WTC11 (cell line): ENCODE measurements at regions of chr19 and their contacts with region 1.

Region 1: GRCh38 chr19:46990991-46991676 is 28.5 kb upstream of the NPAS1 start:
- DNase-seq: peak; percentile 90
- ATAC-seq: peak; percentile 81
- H3K4me3 Mint-ChIP-seq: no peak overlapping the region
- H3K27ac Mint-ChIP-seq: peak overlapping the region; percentile 96
- H3K4me1 Mint-ChIP-seq: peaks cover 11% of the 10 kb centered on the region
- H3K27me3 Mint-ChIP-seq: no peaks in the 10 kb centered on the region
- CTCF ChIP-seq: peak; percentile 60

Region 2: GRCh38 chr19:46860125-46860845 is 130.8 kb before region 1 on chr19:
- CTCF ChIA-PET with region 1: interaction called, 27 read pairs
- POLR2A ChIA-PET with region 1: interaction called, 4 read pairs
- DNase-seq: peak; percentile 98
- ATAC-seq: peak; percentile 76
- H3K4me3 Mint-ChIP-seq: peak overlapping the region; percentile 74
- H3K27ac Mint-ChIP-seq: peak overlapping the region; percentile 98
- H3K4me1 Mint-ChIP-seq: peaks cover 15% of the 10 kb centered on the region
- H3K27me3 Mint-ChIP-seq: peaks cover 6% of the 10 kb centered on the region
- CTCF ChIP-seq: no peak

Region 3: GRCh38 chr19:46924874-46925547 is 66.1 kb before region 1 on chr19:
- CTCF ChIA-PET with region 1: interaction called, 16 read pairs
- POLR2A ChIA-PET with region 1: no interaction called
- DNase-seq: no peak
- ATAC-seq: no peak
- H3K4me3 Mint-ChIP-seq: no peak overlapping the region
- H3K27ac Mint-ChIP-seq: peak overlapping the region; percentile 25
- H3K4me1 Mint-ChIP-seq: peaks cover 33% of the 10 kb centered on the region
- H3K27me3 Mint-ChIP-seq: no peaks in the 10 kb centered on the region
- CTCF ChIP-seq: no peak

Region 4: GRCh38 chr19:46975925-46976782 is 15.0 kb before region 1 on chr19:
- CTCF ChIA-PET with region 1: interaction called, 23 read pairs
- POLR2A ChIA-PET with region 1: no interaction called
- DNase-seq: peak; percentile 40
- ATAC-seq: peak; percentile 46
- H3K4me3 Mint-ChIP-seq: 0 out of 2 replicates have a peak overlapping the region, but pooled peaks have one; percentile 2
- H3K27ac Mint-ChIP-seq: peak overlapping the region; percentile 91
- H3K4me1 Mint-ChIP-seq: peaks cover 46% of the 10 kb centered on the region
- H3K27me3 Mint-ChIP-seq: no peaks in the 10 kb centered on the region
- CTCF ChIP-seq: no peak

Region 5: DNA sequence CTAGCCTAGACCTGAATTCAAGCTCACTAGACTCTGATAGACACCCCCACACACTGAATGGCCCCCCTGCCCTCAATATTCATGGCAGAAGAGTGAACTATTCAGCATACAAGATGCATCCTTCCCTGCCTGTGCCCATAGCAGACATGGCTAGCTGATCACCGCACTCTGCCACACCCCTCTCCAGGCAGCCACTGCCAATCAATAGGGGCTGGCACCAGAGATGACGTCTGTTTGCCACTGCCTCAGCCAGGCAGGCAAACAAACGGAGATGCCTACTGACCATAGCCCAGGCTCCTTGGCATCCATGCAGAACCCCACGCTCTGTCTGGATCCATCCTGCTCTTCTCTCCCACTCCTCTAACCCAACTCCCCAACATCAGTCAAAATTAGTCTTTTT is 14.7 kb after region 1 on chr19:
- CTCF ChIA-PET with region 1: interaction called, 35 read pairs
- POLR2A ChIA-PET with region 1: no interaction called
- DNase-seq: no peak
- ATAC-seq: peak; percentile 40; the same call in 1 of the 2 replicates
- H3K4me3 Mint-ChIP-seq: no peak overlapping the region
- H3K27ac Mint-ChIP-seq: peak overlapping the region; percentile 7
- H3K4me1 Mint-ChIP-seq: peaks cover 21% of the 10 kb centered on the region
- H3K27me3 Mint-ChIP-seq: peaks cover 9% of the 10 kb centered on the region
- CTCF ChIP-seq: no peak